ENCODE measurements at regions of chr5 and their contacts with region 1.

Region 1: GRCh38 chr5:55675119-55675518 is 37.0 kb downstream of the SLC38A9 start:
- DNase-seq: no peak
- ATAC-seq: no peak
- H3K4me3 ChIP-seq: no peak overlapping the region
- H3K27ac ChIP-seq: peak overlapping the region in 1 of 4 donors; percentile 16
- H3K4me1 ChIP-seq: peaks cover 13 to 27% of the 10 kb centered on the region in 2 donors
- H3K27me3 ChIP-seq: no peaks in the 10 kb centered on the region
- CTCF ChIP-seq: no peak
- POLR2A ChIP-seq: no peak

Region 2: GRCh38 chr5:55546947-55547346 is 128.2 kb before region 1 on chr5:
- in situ Hi-C with region 1: no loop called
- intact Hi-C with region 1: no loop called
- DNase-seq: no peak
- ATAC-seq: no peak
- H3K4me3 ChIP-seq: no peak overlapping the region
- H3K27ac ChIP-seq: no peak overlapping the region
- H3K4me1 ChIP-seq: no peaks in the 10 kb centered on the region
- H3K27me3 ChIP-seq: no peaks in the 10 kb centered on the region
- CTCF ChIP-seq: no peak
- POLR2A ChIP-seq: no peak

Region 3: GRCh38 chr5:55636683-55637082 is 38.4 kb before region 1 on chr5:
- in situ Hi-C with region 1: no loop called
- intact Hi-C with region 1: loop called (anchors 5 kb)
- DNase-seq: peak in 1 of 2 donors; percentile 50
- ATAC-seq: peak in 1 of 2 donors; percentile 11
- H3K4me3 ChIP-seq: no peak overlapping the region
- H3K27ac ChIP-seq: peak overlapping the region; percentile 23 to 87 (median 50)
- H3K4me1 ChIP-seq: peaks cover 28 to 39% of the 10 kb centered on the region in 2 donors
- H3K27me3 ChIP-seq: no peaks in the 10 kb centered on the region
- CTCF ChIP-seq: no peak
- POLR2A ChIP-seq: no peak

Measured in gastrocnemius medialis (tissue), 4 donors.